Gastrocnemius medialis (tissue), 4 donors: ENCODE measurements at regions of chr16 and their contacts with region 1.

Region 1: GRCh38 chr16:50152807-50153452 is at the start of gene TENT4B:
- DNase-seq: peak; percentile 75 to 76
- ATAC-seq: peak; percentile 91 to 93
- H3K4me3 ChIP-seq: peak within 1 kb of the TSS; percentile 84 to 97 (median 90)
- H3K27ac ChIP-seq: peak within 1 kb of the TSS; percentile 91 to 99 (median 96)
- H3K4me1 ChIP-seq: peaks cover 20 to 41% of the 10 kb centered on the region in 2 donors
- H3K27me3 ChIP-seq: no peaks in the 10 kb centered on the region
- CTCF ChIP-seq: no peak
- POLR2A ChIP-seq: peak; percentile 62 to 65
- total RNA-seq, gene TENT4B: 5.7 to 12.2 (median 7.0) TPM

Region 2: GRCh38 chr16:49663081-49664065 is 489.6 kb before region 1 on chr16:
- in situ Hi-C with region 1: no loop called
- intact Hi-C with region 1: loop called (anchors 10 kb)
- DNase-seq: peak in 1 of 2 donors; percentile 31
- ATAC-seq: no peak
- H3K4me3 ChIP-seq: peak overlapping the region; percentile 12 to 26 (median 18)
- H3K27ac ChIP-seq: peak overlapping the region; percentile 47 to 75 (median 62)
- H3K4me1 ChIP-seq: peaks cover 35 to 36% of the 10 kb centered on the region in 2 donors
- H3K27me3 ChIP-seq: no peaks in the 10 kb centered on the region
- CTCF ChIP-seq: no peak
- POLR2A ChIP-seq: no peak

Region 3: GRCh38 chr16:50065624-50066481 is 87.1 kb before region 1 on chr16 and contains the start of gene HEATR3:
- in situ Hi-C with region 1: loop called in 1 of 4 experiments (anchors 10 kb)
- intact Hi-C with region 1: loop called (anchors 2 kb)
- DNase-seq: peak; percentile 79 to 89
- ATAC-seq: peak; percentile 97 to 98
- H3K4me3 ChIP-seq: peak within 1 kb of the TSS; percentile 85 to 99 (median 85)
- H3K27ac ChIP-seq: peak within 1 kb of the TSS; percentile 91 to 99 (median 94)
- H3K4me1 ChIP-seq: peaks cover 19 to 27% of the 10 kb centered on the region in 2 donors
- H3K27me3 ChIP-seq: no peaks in the 10 kb centered on the region
- CTCF ChIP-seq: no peak
- POLR2A ChIP-seq: peak; percentile 56 to 61
- total RNA-seq, gene HEATR3: 13.1 to 25.8 (median 14.2) TPM